Panc1 (cell line): ENCODE measurements at regions of chr10 and their contacts with region 1.

Region 1: GRCh38 chr10:50431791-50432190 is 180.5 kb upstream of the ASAH2 start:
- DNase-seq: no peak
- ATAC-seq: no peak
- H3K4me3 ChIP-seq: no peak overlapping the region
- H3K27ac ChIP-seq: no peak overlapping the region
- H3K4me1 ChIP-seq: no peaks in the 10 kb centered on the region
- H3K27me3 ChIP-seq: no peaks in the 10 kb centered on the region
- CTCF ChIP-seq: no peak

Region 2: GRCh38 chr10:50635286-50635685 is 203.5 kb after region 1 on chr10:
- CTCF ChIA-PET with region 1: no interaction called
- POLR2A ChIA-PET with region 1: no interaction called
- in situ Hi-C with region 1: no loop called
- intact Hi-C with region 1: no loop called
- DNase-seq: no peak
- ATAC-seq: no peak
- H3K4me3 ChIP-seq: no peak overlapping the region
- H3K27ac ChIP-seq: no peak overlapping the region
- H3K4me1 ChIP-seq: 0 out of 2 replicates have a peak, but pooled peaks cover 3% of the 10 kb centered on the region
- H3K27me3 ChIP-seq: no peaks in the 10 kb centered on the region
- CTCF ChIP-seq: no peak

Region 3: GRCh38 chr10:52172581-52172980 is 1740.8 kb after region 1 on chr10:
- CTCF ChIA-PET with region 1: no interaction called
- POLR2A ChIA-PET with region 1: no interaction called
- in situ Hi-C with region 1: no loop called
- intact Hi-C with region 1: loop called (anchors 10 kb)
- DNase-seq: no peak
- ATAC-seq: peak; percentile 75
- H3K4me3 ChIP-seq: no peak overlapping the region
- H3K27ac ChIP-seq: no peak overlapping the region
- H3K4me1 ChIP-seq: no peaks in the 10 kb centered on the region
- H3K27me3 ChIP-seq: no peaks in the 10 kb centered on the region
- CTCF ChIP-seq: peak; percentile 40